B cell (primary cell): ENCODE measurements at regions of chr9 and their contacts with region 1.

Region 1: DNA sequence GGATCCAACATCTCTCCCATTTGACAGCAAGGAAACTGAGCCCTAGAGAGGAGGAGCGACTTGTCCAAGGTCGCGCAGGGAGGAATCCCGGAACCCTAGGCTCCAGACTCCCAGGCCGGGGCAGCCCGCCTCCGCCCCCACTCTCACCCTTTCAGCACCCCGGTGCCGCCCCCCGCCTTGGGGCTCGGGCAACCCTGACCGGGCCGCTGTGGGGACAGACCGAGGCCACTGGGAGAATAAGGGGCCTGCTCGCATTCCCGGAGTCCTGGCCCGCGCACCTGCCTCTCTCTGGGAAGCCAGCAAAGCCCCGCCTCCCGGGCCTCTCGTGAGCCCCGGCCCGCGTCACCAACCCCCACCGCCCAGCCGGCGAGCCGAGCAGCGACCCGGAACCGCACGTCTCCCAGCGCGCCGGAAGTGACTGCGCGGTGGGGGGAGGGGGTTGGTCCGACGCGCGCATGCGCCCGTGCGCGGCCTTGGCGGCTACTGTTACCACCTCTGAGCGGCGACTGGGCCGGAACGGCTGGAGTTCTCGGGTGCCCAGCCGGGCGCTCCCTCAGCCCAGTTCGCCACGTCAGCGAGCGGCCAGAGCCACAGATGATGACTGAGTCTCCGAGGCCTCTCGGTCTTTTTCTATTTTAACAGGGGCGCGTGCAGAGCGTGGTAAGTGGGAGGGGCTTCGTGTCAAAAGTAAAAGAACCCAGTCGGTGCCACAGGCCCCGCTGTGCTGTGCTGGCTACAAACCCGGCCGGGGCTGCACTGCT is at the start of gene GOLGA1:
- DNase-seq: peak; percentile 98
- ATAC-seq: peak; percentile 88
- H3K4me3 ChIP-seq: peak within 1 kb of the TSS; percentile 73 to 95 (median 91)
- H3K4me3 Mint-ChIP-seq: peak within 1 kb of the TSS; percentile 85
- H3K27ac ChIP-seq: peak within 1 kb of the TSS; percentile 98
- H3K27ac Mint-ChIP-seq: peak within 1 kb of the TSS; percentile 90
- H3K4me1 ChIP-seq: peaks cover 16 to 17% of the 10 kb centered on the region in 2 donors
- H3K4me1 Mint-ChIP-seq: peaks cover 26% of the 10 kb centered on the region
- H3K27me3 ChIP-seq: no peaks in the 10 kb centered on the region
- H3K27me3 Mint-ChIP-seq: no peaks in the 10 kb centered on the region
- CTCF ChIP-seq: no peak
- total RNA-seq, gene GOLGA1: 24.6 and 26.2 TPM in 2 replicates

Region 2: DNA sequence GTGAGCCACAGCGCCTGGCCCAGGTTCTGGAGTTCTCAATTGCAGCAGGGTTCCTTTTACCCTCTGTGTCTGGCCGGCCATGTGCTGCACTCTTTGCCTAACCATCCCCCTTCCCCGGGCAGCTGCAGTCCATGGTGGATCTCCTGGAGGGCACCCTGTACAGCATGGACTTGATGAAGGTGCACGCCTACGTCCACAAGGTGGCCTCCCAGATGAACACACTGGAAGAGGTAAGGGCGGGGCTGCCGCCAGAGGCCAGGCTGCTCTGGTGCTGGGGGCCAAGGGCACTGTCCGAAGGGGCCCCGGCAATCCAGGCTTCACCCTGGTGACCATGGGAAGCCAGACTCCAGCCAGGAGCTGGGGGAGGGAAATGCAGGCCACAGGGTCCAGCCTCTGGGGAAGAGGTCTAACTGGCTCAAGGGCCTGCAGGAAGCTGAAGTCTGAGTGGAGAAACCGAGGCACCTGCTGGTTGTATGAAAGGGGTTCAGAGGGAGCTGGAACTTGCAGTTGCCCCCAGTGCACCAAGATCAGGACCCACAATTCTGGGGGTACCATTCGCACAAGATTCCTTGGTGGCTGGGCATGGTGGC is 145.9 kb before region 1 on chr9:
- CTCF ChIA-PET with region 1: no interaction called
- POLR2A ChIA-PET with region 1: no interaction called
- intact Hi-C with region 1: no loop called
- DNase-seq: no peak
- ATAC-seq: no peak
- H3K4me3 ChIP-seq: no peak overlapping the region
- H3K4me3 Mint-ChIP-seq: no peak overlapping the region
- H3K27ac ChIP-seq: no peak overlapping the region
- H3K27ac Mint-ChIP-seq: no peak overlapping the region
- H3K4me1 ChIP-seq: peaks cover 29 to 34% of the 10 kb centered on the region in 2 donors
- H3K4me1 Mint-ChIP-seq: peaks cover 20% of the 10 kb centered on the region
- H3K27me3 ChIP-seq: peaks cover 0 to 4% (median 1%) of the 10 kb centered on the region in 4 experiments
- H3K27me3 Mint-ChIP-seq: no peaks in the 10 kb centered on the region
- CTCF ChIP-seq: no peak

Region 3: DNA sequence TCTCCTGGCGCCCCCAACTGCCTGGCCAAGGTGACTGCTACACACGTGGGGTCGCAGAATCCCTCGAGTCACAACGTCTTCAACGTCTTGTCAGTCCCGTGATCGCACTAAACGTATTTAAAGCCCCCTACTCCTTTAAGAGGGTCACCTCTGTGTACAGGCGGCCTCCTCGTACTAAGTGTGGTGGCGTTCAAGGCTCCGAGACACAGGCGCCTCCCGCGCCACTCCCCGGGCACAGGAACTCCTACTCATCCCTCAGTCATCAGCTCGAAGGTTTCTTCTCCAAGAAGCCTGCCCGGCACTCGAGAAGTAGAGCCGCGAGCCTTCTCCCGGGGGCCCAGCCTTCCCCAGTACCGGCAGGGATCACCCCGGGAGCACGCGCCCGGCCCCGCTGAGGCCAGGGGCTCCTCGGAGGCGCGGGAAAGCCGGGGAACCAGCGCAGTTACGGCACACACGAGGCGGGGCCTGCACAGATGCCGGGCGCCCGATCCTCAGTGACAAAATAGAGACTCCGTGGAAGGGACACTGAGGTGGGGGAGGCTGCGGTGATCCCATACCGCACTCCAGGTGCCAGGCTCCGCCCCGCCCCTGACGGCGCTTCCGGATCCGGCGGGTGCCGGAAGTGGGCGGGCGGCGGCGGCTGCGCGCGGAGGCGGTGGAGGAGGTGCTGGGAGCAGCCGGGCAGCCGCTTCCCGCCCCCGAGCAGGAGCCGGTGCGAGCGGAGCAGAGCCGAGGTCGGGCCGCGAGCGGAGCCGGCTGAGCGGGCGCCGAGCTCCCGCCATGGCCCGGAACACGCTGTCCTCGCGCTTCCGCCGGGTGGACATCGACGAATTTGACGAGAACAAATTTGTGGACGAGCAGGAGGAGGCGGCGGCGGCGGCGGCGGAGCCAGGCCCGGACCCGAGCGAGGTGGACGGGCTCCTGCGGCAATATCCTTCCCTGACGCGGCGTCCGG is 72.1 kb before region 1 on chr9:
- CTCF ChIA-PET with region 1: interaction called, 3 read pairs
- POLR2A ChIA-PET with region 1: interaction called, 3 read pairs
- intact Hi-C with region 1: loop called (anchors 1 kb)
- DNase-seq: peak; percentile 92
- ATAC-seq: peak; percentile 72
- H3K4me3 ChIP-seq: peak overlapping the region; percentile 79 to 100 (median 97)
- H3K4me3 Mint-ChIP-seq: peak overlapping the region; percentile 94
- H3K27ac ChIP-seq: peak overlapping the region; percentile 92 to 96
- H3K27ac Mint-ChIP-seq: peak overlapping the region; percentile 97
- H3K4me1 ChIP-seq: peaks cover 44 to 52% of the 10 kb centered on the region in 2 donors
- H3K4me1 Mint-ChIP-seq: peaks cover 54% of the 10 kb centered on the region
- H3K27me3 ChIP-seq: no peaks in the 10 kb centered on the region
- H3K27me3 Mint-ChIP-seq: no peaks in the 10 kb centered on the region
- CTCF ChIP-seq: no peak

Region 4: GRCh38 chr9:125049212-125050049 is 108.6 kb after region 1 on chr9:
- CTCF ChIA-PET with region 1: no interaction called
- POLR2A ChIA-PET with region 1: no interaction called
- intact Hi-C with region 1: loop called (anchors 10 kb)
- DNase-seq: no peak
- ATAC-seq: no peak
- H3K4me3 ChIP-seq: no peak overlapping the region
- H3K4me3 Mint-ChIP-seq: no peak overlapping the region
- H3K27ac ChIP-seq: no peak overlapping the region
- H3K27ac Mint-ChIP-seq: no peak overlapping the region
- H3K4me1 ChIP-seq: no peaks in the 10 kb centered on the region
- H3K4me1 Mint-ChIP-seq: no peaks in the 10 kb centered on the region
- H3K27me3 ChIP-seq: no peaks in the 10 kb centered on the region
- H3K27me3 Mint-ChIP-seq: no peaks in the 10 kb centered on the region
- CTCF ChIP-seq: no peak

Region 5: GRCh38 chr9:125189361-125190289 is 248.8 kb after region 1 on chr9 and contains the start of gene PPP6C:
- CTCF ChIA-PET with region 1: no interaction called
- POLR2A ChIA-PET with region 1: no interaction called
- intact Hi-C with region 1: loop called (anchors 2 kb)
- DNase-seq: peak; percentile 98
- ATAC-seq: peak; percentile 98
- H3K4me3 ChIP-seq: peak within 1 kb of the TSS; percentile 89 to 99 (median 99)
- H3K4me3 Mint-ChIP-seq: peak within 1 kb of the TSS; percentile 97
- H3K27ac ChIP-seq: peak within 1 kb of the TSS; percentile 91 to 98
- H3K27ac Mint-ChIP-seq: peak within 1 kb of the TSS; percentile 96
- H3K4me1 ChIP-seq: peaks cover 19 to 27% of the 10 kb centered on the region in 2 donors
- H3K4me1 Mint-ChIP-seq: peaks cover 39% of the 10 kb centered on the region
- H3K27me3 ChIP-seq: no peaks in the 10 kb centered on the region
- H3K27me3 Mint-ChIP-seq: no peaks in the 10 kb centered on the region
- CTCF ChIP-seq: peak; percentile 78
- total RNA-seq, gene PPP6C: 36.1 and 38.6 TPM in 2 replicates